GM12878 (cell line): ENCODE measurements at regions of chr5 and their contacts with region 1.

Region 1: GRCh38 chr5:178215263-178216002 is 11.1 kb downstream of the HNRNPAB start:
- DNase-seq: no peak
- ATAC-seq: peak; percentile 3; the same call in 1 of the 3 replicates
- H3K4me3 ChIP-seq: no peak overlapping the region
- H3K27ac ChIP-seq: no peak overlapping the region
- H3K4me1 ChIP-seq: no peaks in the 10 kb centered on the region; the same call in 1 of the 2 replicates
- H3K27me3 ChIP-seq: no peaks in the 10 kb centered on the region
- CTCF ChIP-seq: no peak
- EP300 ChIP-seq: no peak
- POLR2A ChIP-seq: peak; percentile 60
- RAD21 ChIP-seq: no peak

Region 2: DNA sequence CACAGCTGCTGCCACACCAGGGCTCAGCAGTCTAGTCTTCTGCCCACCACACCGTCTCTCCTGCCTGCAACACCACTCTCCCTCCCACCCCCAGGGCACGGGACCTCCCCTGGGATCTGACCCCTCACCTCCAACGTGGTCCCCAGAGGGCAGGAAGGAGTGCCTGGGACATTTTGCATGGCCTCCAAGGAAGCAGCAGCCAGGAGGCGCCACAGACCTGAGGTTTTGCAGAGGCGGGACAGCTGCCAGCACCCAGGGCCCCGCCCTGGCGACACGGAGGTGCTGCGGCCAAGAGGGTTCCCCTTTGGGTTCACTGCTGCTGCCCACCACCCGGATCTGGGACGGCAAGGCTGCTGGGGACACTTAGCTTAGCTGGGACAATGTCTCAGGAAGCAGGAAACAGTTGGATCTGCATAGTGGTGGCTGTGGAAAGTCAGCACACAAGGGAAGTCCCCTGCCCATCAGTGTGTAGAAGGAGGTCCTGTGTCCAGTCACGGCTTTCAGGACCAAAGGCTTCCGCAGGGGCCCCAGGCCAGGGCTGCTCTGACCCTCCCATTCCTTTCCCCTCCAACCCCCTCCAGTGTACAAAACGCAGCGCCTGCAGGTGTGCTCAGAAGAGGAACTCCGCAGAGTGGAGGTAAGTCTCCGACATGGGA is 233.2 kb before region 1 on chr5:
- CTCF ChIA-PET with region 1: no interaction called
- POLR2A ChIA-PET with region 1: no interaction called
- RAD21 ChIA-PET with region 1: no interaction called
- SMC1A ChIA-PET with region 1: no interaction called
- in situ Hi-C with region 1: no loop called
- intact Hi-C with region 1: no loop called
- DNase-seq: no peak
- ATAC-seq: peak; percentile 43; the same call in 2 of the 3 replicates
- H3K4me3 ChIP-seq: no peak overlapping the region
- H3K27ac ChIP-seq: no peak overlapping the region
- H3K4me1 ChIP-seq: no peaks in the 10 kb centered on the region
- H3K27me3 ChIP-seq: peaks cover 3 to 4% of the 10 kb centered on the region in 2 experiments
- CTCF ChIP-seq: peak in 2 of 3 experiments; percentile 14 to 17; a peak in 1 of 6 replicates
- EP300 ChIP-seq: no peak
- POLR2A ChIP-seq: no peak
- RAD21 ChIP-seq: peak; percentile 35; the same call in 1 of the 2 replicates

Region 3: GRCh38 chr5:178094345-178094744 is 121.1 kb before region 1 on chr5:
- CTCF ChIA-PET with region 1: no interaction called
- POLR2A ChIA-PET with region 1: no interaction called
- RAD21 ChIA-PET with region 1: no interaction called
- SMC1A ChIA-PET with region 1: no interaction called
- in situ Hi-C with region 1: no loop called
- intact Hi-C with region 1: no loop called
- DNase-seq: no peak
- ATAC-seq: no peak
- H3K4me3 ChIP-seq: no peak overlapping the region
- H3K27ac ChIP-seq: no peak overlapping the region
- H3K4me1 ChIP-seq: peaks cover 6% of the 10 kb centered on the region; the same call in 1 of the 2 replicates
- H3K27me3 ChIP-seq: no peaks in the 10 kb centered on the region
- CTCF ChIP-seq: no peak
- EP300 ChIP-seq: no peak
- POLR2A ChIP-seq: no peak
- RAD21 ChIP-seq: no peak

Region 4: DNA sequence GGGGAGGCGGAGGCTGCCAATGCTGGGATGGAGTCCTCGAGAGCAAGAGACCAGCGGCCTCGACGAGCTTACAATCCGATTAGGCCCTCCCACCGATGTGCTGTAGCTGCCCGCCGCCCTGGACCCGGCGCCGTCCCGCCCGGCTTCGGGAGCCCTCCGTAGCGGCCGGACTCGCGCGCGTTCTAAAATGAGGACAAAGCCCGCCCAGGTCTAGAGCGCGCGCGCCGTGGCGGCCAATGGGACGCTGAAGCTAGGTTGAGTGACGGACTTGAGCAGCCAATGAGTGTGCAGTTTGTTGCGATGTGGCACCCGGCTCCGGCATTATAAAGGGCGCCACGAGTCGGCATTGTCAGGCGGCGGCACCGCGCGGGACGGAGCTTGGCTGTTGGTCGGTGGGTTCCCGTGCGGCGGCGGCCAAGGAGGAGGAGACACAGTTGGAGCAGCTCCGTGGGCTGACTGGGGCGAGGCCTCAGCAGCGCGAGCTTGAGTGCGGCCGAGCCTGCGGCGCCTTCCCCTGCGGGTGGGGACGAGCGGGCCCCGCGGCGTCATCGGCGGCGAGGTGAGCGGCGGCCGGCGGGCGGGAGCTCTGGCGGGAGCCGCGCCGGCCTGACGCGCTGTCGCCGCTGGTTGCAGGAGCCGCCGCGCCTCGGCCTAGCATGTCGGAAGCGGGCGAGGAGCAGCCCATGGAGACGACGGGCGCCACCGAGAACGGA is 11.1 kb before region 1 on chr5 and contains the start of gene HNRNPAB:
- CTCF ChIA-PET with region 1: interaction called, 12 read pairs
- POLR2A ChIA-PET with region 1: interaction called, 13 read pairs
- RAD21 ChIA-PET with region 1: no interaction called
- SMC1A ChIA-PET with region 1: interaction called, 6 read pairs
- in situ Hi-C with region 1: no loop called
- intact Hi-C with region 1: no loop called
- DNase-seq: peak; percentile 77
- ATAC-seq: peak; percentile 89
- H3K4me3 ChIP-seq: peak within 1 kb of the TSS; percentile 97
- H3K27ac ChIP-seq: peak within 1 kb of the TSS; percentile 67
- H3K4me1 ChIP-seq: peaks cover 15% of the 10 kb centered on the region
- H3K27me3 ChIP-seq: no peaks in the 10 kb centered on the region
- CTCF ChIP-seq: no peak
- EP300 ChIP-seq: no peak
- POLR2A ChIP-seq: peak; percentile 100
- RAD21 ChIP-seq: no peak
- polyA plus RNA-seq, gene HNRNPAB: 42.3 to 77.6 TPM